Activated CD8-positive, alpha-beta memory T cell treated with anti-CD3 and anti-CD28 coated beads, Interleukin-2, amount 10 ng/mL, durations not matched to agents 7 days and 5 days (primary cell): ENCODE measurements at regions of chr15 and their contacts with region 1.

Region 1: GRCh38 chr15:78108299-78109084 is 16.1 kb downstream of the SH2D7 start:
- DNase-seq: peak; percentile 92
- ATAC-seq: peak; percentile 71
- H3K4me3 Mint-ChIP-seq: no peak overlapping the region
- H3K27ac Mint-ChIP-seq: no peak overlapping the region
- H3K4me1 Mint-ChIP-seq: peaks cover 56% of the 10 kb centered on the region
- H3K27me3 Mint-ChIP-seq: no peaks in the 10 kb centered on the region

Region 2: DNA sequence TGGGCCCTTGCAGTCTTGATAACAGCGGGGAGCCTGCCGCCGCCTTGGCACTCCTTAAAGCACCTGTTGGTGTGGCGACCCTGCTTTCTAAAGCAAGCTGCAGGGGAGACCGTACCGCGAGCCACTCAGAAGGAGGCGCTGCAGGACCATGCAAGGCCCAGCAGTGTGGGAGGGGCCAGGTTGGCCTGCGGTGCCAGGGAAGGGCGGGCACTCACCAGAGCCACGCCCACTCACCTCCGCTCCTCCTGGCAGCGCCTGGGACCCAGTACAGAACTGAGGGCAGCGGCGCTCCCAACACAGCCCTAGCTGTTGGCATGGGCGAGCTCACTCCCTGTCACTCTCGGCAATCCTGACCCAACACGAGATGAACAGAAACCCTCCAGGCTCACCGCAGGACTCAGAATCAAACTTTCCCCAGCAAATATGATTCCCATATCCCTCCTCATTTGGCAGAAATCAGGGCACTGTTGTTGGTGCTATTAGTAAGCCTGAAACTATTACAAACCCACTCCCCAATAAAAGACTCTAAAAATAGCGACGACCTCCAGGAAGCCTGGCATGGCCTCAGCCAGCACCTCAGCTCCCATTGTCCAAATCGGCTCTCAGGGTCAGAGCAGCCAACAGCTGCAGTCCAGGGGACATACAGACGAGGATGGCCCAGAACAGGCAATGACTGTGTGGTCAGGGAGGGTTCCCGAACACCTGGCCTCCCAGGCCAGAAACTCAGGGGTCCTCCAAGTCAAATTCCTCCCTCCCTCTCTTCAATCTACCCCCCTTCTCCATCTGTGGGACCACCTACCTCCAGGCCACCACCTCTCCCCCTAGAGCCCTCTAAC is 108.2 kb before region 1 on chr15:
- CTCF ChIA-PET with region 1: interaction called, 19 read pairs
- DNase-seq: peak; percentile 79
- ATAC-seq: peak; percentile 87
- H3K4me3 Mint-ChIP-seq: no peak overlapping the region
- H3K27ac Mint-ChIP-seq: peak overlapping the region; percentile 9
- H3K4me1 Mint-ChIP-seq: peaks cover 21% of the 10 kb centered on the region
- H3K27me3 Mint-ChIP-seq: no peaks in the 10 kb centered on the region

Region 3: DNA sequence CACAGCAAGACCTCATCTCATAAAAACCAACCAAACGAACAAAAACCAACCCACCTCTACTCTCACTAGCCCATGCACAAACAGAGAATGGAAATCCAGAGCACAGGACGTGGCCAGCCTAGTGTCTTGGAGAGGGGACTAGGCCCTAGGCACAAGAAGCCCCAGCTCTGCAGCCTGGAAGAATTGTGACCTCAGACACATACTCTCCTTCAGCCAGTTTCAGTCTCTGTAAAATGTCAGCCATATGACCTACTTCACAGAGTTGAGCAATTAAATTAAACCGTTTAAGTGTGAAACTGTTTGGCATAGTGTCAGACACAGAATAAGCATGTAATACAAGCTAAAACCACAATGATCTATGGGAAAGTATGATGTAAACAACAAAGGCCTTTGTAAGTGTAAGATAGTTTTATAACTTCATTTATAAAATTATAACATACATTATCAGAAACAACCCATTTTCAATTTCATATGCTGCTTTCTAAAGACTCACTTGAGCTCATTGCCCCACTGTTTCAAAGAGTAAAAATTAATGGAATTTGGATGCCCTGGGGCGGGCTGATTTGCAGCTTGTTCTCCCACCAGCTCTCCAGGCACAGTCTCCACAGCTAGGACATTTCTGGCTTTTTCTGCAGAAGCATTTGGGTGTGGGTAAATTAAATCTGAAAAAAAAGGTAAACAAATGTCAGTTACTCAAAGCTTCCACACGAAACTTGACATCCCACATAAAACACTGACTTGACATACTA is 63.9 kb before region 1 on chr15:
- CTCF ChIA-PET with region 1: interaction called, 41 read pairs
- DNase-seq: peak; percentile 64
- ATAC-seq: peak; percentile 56
- H3K4me3 Mint-ChIP-seq: peak overlapping the region; percentile 1
- H3K27ac Mint-ChIP-seq: peak overlapping the region; percentile 82
- H3K4me1 Mint-ChIP-seq: peaks cover 95% of the 10 kb centered on the region
- H3K27me3 Mint-ChIP-seq: no peaks in the 10 kb centered on the region

Region 4: DNA sequence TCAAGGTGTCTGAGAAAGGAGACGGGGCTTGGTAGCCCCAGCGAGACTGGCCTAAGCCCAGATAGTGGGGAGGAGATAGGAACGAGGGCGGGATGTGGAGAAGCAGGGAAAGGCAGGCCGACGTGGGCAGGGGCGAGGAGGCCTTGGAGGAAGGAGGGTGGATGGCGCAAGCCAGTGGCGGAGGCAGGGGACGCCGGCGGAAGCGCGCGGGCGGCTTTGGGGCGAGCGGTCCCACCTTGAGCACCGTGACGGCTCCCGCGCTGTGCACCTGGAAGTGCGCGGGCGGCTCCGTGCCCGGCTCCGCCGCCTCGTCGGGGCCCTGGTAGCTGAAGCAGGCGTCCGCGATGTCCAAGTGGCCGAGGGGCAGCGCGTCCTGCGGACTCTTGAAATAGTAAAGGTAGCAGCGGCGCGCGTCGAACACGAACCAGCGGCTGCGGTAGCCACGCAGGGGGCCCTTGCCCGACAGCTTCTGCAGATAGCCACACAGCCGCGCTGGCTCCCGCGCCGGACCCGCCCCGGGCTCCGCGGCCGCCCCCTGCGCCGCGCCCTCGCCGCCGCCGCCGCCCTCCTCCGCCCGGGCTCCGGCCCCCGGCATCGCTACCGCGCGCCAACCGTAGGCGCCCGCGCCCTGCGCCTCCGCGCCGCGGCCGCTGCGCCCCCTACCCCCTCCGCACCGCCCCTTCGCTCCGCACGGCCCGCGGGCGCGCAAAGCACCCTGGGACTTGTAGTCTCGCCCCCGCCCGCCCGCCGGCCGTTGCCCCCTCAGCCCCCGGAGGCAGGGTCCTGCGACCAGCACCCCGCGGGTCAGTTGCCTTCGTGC is 31.2 kb before region 1 on chr15 and contains the start of gene TBC1D2B:
- CTCF ChIA-PET with region 1: interaction called, 251 read pairs
- DNase-seq: peak; percentile 77
- ATAC-seq: peak; percentile 86
- H3K4me3 Mint-ChIP-seq: peak within 1 kb of the TSS; percentile 100
- H3K27ac Mint-ChIP-seq: peak within 1 kb of the TSS; percentile 94
- H3K4me1 Mint-ChIP-seq: peaks cover 41% of the 10 kb centered on the region
- H3K27me3 Mint-ChIP-seq: no peaks in the 10 kb centered on the region
- total RNA-seq, gene TBC1D2B: 118 to 135 TPM

Region 5: DNA sequence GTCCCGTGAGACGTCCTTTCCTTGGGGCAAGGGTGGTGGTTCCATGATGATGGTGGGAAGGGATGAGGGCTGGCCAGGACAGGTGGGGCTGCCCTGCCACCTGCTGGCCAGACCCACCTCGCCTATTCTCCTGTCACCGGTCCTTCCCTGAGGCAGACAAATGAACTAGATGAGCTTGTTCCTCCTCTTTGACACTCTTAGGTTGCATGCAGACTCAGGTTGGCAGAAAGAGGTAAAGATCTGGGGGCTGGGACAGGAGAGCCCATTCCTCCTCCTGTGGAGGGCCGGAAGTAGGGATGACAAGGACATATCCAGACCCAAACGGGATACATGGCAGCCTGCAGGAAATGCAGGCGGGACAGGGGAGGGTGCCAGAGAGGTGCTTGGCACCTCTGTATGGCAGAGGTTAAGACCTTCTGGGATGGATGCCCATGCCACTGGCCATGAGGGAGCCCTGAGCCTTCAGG is 87.3 kb after region 1 on chr15:
- CTCF ChIA-PET with region 1: interaction called, 134 read pairs
- DNase-seq: peak; percentile 61
- ATAC-seq: peak; percentile 89
- H3K4me3 Mint-ChIP-seq: no peak overlapping the region
- H3K27ac Mint-ChIP-seq: no peak overlapping the region
- H3K4me1 Mint-ChIP-seq: no peaks in the 10 kb centered on the region
- H3K27me3 Mint-ChIP-seq: peaks cover 11% of the 10 kb centered on the region

Region 6: DNA sequence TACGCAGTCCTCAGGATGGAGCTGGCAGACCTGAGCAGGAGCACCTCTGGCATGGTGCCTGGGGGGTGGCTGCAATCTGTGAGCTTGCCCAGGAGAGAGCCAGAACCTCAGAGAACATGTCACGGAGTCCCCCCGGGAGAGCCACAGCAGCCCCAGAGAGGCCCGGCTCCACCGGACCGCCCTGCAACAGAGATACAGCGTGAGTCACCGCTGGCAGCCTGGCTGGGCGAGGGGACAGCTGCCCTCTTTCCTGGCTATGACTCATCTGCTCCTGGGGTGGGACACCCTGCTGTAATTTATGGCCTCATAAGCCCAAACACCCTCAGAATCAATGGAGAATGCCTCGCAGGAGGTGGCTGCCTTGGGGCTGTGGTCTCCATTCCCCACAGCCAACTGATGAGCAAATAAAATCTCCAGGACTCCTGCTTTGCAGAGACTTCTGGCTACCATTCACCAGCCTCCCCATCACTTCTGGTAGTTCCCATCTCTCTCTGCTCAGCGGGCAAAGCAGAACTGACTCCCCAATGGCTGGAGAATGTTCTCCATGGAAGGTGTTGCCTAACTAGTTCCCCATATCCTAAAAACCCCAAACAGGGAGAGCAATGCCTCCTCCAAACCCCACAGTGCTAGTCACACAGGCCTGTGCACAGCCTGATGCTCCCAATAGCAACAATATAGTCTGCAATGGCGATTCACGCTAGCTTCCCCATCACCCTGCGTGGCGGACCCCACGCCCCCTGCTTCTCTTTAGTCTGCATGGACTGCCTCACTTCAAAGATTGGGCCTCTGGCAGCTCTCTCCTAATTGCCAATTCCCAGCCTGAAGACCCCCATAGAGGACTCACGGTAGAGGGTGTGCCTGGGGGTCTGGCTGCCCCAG is 104.3 kb after region 1 on chr15:
- CTCF ChIA-PET with region 1: no interaction called
- DNase-seq: no peak
- ATAC-seq: no peak
- H3K4me3 Mint-ChIP-seq: no peak overlapping the region
- H3K27ac Mint-ChIP-seq: no peak overlapping the region
- H3K4me1 Mint-ChIP-seq: peaks cover 1% of the 10 kb centered on the region
- H3K27me3 Mint-ChIP-seq: peaks cover 23% of the 10 kb centered on the region

Region 7: GRCh38 chr15:78360426-78360825 is 251.9 kb after region 1 on chr15:
- CTCF ChIA-PET with region 1: no interaction called
- DNase-seq: no peak
- ATAC-seq: no peak
- H3K4me3 Mint-ChIP-seq: no peak overlapping the region
- H3K27ac Mint-ChIP-seq: no peak overlapping the region
- H3K4me1 Mint-ChIP-seq: no peaks in the 10 kb centered on the region
- H3K27me3 Mint-ChIP-seq: peaks cover 38% of the 10 kb centered on the region